HepG2 (cell line): ENCODE measurements at regions of chr3 and their contacts with region 1.

Region 1: GRCh38 chr3:193157051-193157450 is 84.0 kb upstream of the PLAAT1 start:
- DNase-seq: no peak
- ATAC-seq: no peak
- H3K4me3 ChIP-seq: no peak overlapping the region
- H3K27ac ChIP-seq: no peak overlapping the region
- H3K4me1 ChIP-seq: no peaks in the 10 kb centered on the region
- H3K27me3 ChIP-seq: no peaks in the 10 kb centered on the region
- CTCF ChIP-seq: no peak
- EP300 ChIP-seq: no peak
- POLR2A ChIP-seq: no peak
- RAD21 ChIP-seq: no peak

Region 2: GRCh38 chr3:193168911-193169310 is 11.9 kb after region 1 on chr3:
- CTCF ChIA-PET with region 1: no interaction called
- POLR2A ChIA-PET with region 1: no interaction called
- in situ Hi-C with region 1: no loop called
- intact Hi-C with region 1: loop called (anchors 1 kb)
- DNase-seq: no peak
- ATAC-seq: no peak
- H3K4me3 ChIP-seq: no peak overlapping the region
- H3K27ac ChIP-seq: no peak overlapping the region
- H3K4me1 ChIP-seq: no peaks in the 10 kb centered on the region
- H3K27me3 ChIP-seq: no peaks in the 10 kb centered on the region
- CTCF ChIP-seq: no peak
- EP300 ChIP-seq: no peak
- POLR2A ChIP-seq: no peak
- RAD21 ChIP-seq: no peak